ENCODE measurements at regions of chr7 and their contacts with region 1.

Region 1: DNA sequence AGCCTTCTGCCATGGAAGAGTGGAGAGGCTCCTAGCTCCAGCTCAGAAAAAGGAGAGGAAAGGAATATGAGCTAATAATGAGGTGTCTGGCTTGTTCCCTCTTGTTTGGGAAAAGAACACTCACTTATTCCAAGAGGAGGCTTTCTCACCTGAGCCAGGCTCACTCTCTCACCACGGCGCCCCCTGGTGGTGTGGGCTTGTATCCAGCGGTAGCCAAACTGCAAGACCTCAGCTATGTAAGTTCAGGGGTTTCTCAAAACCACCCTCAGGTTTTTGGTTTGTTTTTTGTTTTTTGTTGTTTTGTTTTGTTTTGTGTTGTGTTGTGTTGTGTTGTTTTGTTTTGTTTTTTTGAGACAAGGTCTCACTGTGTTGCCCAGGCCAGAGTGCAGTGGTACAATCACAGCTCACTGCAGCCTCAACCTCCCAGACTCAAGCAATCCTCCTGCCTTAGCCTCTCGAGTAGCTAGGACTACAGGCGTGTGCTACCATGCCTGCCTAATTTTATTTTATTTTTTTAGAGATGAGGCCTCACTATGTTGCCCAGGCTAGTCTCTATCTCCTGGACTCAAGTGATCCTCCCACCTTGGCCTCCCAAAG is 124.0 kb downstream of the TMEM130 start:
- DNase-seq: peak; percentile 80
- ATAC-seq: no peak

Region 2: DNA sequence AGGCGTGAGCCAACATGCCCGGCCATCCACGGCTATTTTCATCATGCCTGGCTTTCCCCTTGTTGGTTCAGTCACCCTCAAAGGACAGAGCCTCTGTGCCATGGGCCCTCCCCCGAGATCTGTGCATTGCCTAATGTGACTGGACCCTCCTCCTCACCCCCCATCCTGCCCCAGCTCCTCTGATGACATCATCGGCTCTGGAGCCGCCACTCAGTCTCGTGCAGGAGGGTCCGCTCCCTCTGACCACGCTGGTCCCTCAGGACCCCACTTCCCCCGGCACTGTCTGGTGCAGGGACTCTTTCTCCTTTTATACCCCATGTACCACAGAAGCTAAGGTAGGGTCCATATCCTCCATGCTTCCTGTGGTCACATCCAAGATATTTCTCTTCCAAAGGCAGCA is 311.7 kb before region 1 on chr7:
- intact Hi-C with region 1: loop called (anchors 1 kb)
- DNase-seq: no peak
- ATAC-seq: no peak

Measured in Right ventricle myocardium inferior (tissue), 1 donor.